Activated CD4-positive, alpha-beta T cell treated with anti-CD3 and anti-CD28 coated beads, Interleukin-2, amount 10 ng/mL, durations not matched to agents 24 days and 14 days (primary cell): ENCODE measurements at regions of chr3 and their contacts with region 1.

Region 1: DNA sequence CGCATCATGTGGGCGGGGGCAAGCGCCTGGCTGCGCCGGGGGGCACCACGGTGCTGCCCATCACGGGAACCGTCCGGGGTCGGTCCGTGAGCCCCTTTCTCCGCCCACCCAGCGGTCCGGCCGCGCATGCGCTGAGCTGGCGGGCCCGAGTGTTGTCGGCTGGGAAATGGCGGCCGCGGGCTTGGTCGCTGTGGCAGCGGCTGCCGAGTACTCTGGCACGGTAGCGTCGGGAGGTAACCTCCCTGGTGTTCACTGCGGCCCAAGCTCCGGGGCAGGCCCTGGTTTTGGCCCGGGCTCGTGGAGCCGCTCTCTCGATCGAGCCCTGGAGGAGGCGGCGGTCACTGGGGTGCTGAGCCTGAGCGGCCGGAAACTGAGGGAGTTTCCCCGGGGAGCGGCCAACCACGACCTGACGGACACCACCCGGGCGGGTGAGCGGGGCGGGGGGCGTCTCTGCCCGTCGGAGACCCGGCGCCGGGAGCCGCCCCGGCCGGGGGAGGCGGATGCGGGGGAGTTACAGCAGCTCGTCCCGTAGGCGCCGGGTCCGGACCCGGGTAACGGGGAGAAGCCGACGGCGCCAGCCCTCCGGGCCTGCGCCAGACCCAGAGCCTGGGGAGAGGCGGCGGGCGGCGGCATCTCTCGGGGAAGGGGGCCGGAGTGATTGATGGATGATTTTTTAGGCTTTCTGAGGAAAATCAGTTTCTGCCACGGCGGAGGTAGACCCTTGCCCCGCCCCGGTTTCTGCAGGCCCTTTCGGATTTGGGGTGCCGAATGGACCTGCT is at the start of gene LRCH3:
- DNase-seq: peak; percentile 96
- H3K4me3 Mint-ChIP-seq: peak within 1 kb of the TSS; percentile 92
- H3K27ac Mint-ChIP-seq: peak within 1 kb of the TSS; percentile 97
- H3K4me1 Mint-ChIP-seq: peaks cover 29% of the 10 kb centered on the region
- H3K27me3 Mint-ChIP-seq: no peaks in the 10 kb centered on the region
- total RNA-seq, gene LRCH3: 54.7 and 56.4 TPM in 2 replicates

Region 2: GRCh38 chr3:197554562-197555280 is 236.6 kb before region 1 on chr3:
- intact Hi-C with region 1: loop called (anchors 5 kb)
- DNase-seq: peak; percentile 98
- H3K4me3 Mint-ChIP-seq: peak overlapping the region; percentile 88
- H3K27ac Mint-ChIP-seq: peak overlapping the region; percentile 98
- H3K4me1 Mint-ChIP-seq: peaks cover 39% of the 10 kb centered on the region
- H3K27me3 Mint-ChIP-seq: peaks cover 9% of the 10 kb centered on the region

Region 3: GRCh38 chr3:197567904-197568681 is 223.2 kb before region 1 on chr3:
- intact Hi-C with region 1: no loop called
- DNase-seq: no peak
- H3K4me3 Mint-ChIP-seq: no peak overlapping the region
- H3K27ac Mint-ChIP-seq: no peak overlapping the region
- H3K4me1 Mint-ChIP-seq: no peaks in the 10 kb centered on the region
- H3K27me3 Mint-ChIP-seq: peaks cover 8% of the 10 kb centered on the region

Region 4: DNA sequence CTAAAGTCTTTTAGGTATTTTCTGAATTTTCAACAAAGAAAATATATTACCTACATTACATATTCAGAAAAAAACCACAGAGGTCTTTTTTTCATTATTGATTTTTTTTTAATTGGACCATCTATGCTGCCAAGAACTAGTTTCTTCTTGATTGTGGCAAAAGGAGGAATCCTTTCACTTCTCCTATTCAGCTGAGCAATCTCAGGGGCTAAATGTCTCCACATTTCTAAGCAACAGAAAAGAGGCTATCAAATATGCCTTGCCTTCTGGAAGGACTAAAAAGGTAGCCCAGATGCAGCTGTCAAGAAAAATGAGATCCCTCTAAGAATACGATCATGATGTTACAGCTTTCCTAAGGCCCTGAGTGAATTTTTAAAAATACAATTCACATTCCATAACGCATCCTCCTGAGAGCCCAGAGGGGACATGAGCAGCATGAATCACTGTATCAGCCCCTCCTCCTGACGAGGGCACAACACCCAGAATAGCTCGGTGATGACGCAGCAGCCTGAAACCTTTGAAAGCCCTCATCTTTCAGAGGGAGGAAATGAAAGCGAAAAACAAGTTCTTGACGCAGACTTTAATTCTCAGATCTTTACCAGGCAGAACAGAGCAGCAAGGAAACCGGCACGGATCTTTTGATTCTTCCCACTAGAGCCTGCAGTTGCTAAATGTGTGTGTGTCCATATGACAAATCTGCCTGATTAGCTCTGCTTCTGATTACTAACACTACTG is 79.2 kb before region 1 on chr3:
- intact Hi-C with region 1: loop called (anchors 2 kb)
- DNase-seq: peak; percentile 95
- H3K4me3 Mint-ChIP-seq: peak overlapping the region; percentile 78
- H3K27ac Mint-ChIP-seq: peak overlapping the region; percentile 93
- H3K4me1 Mint-ChIP-seq: peaks cover 33% of the 10 kb centered on the region
- H3K27me3 Mint-ChIP-seq: no peaks in the 10 kb centered on the region

Region 5: GRCh38 chr3:197749601-197750395 is 41.5 kb before region 1 on chr3 and contains the start of gene FYTTD1:
- intact Hi-C with region 1: loop called (anchors 1 kb)
- DNase-seq: peak; percentile 97
- H3K4me3 Mint-ChIP-seq: peak within 1 kb of the TSS; percentile 92
- H3K27ac Mint-ChIP-seq: peak within 1 kb of the TSS; percentile 96
- H3K4me1 Mint-ChIP-seq: peaks cover 31% of the 10 kb centered on the region
- H3K27me3 Mint-ChIP-seq: peaks cover 4% of the 10 kb centered on the region
- total RNA-seq, gene FYTTD1: 53.2 and 56.8 TPM in 2 replicates

Region 6: DNA sequence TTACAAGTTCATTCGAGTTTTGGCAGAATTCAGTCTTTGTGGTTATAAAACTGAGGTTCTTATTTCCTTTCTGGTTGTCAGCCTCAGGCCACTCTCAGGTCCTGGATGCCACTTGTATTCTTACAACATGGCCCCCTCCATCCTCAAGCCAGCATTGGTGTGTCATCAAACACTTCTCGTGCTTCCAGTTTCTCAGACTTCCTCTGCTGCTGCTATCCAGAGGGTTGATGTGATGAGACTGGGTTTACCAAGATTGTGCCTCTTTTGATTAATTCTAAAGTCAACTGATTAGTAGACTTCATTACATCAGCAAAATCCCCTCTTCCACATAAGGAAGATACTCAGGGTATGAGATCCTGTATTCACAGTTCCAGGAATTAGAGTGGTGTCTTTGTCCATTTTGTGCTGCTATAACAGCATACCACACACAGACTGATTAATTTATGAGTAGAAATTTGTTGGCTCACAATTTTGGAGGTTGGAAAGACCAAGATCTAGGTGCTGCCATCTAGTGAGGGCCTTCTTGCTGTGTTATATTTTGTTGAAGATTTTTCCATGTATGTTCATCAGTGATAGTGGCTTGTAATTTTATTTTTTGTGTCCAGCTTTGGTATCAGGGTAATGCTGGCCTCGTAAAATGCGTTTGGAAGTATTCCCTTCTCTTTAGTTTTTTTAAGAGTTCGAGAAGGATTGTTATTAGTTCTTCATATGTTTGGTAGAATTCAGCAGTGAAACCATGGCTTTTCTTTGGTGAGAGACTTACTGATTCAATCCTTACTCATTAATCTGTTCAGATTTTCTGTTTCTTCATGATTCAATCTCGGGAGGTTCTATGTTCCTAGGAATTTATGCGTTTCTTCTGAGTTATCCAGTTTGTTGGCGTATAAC is 10.8 kb after region 1 on chr3:
- intact Hi-C with region 1: loop called (anchors 1 kb)
- DNase-seq: peak; percentile 74
- H3K4me3 Mint-ChIP-seq: peak overlapping the region; percentile 18
- H3K27ac Mint-ChIP-seq: peak overlapping the region; percentile 34
- H3K4me1 Mint-ChIP-seq: peaks cover 33% of the 10 kb centered on the region
- H3K27me3 Mint-ChIP-seq: no peaks in the 10 kb centered on the region

Region 7: GRCh38 chr3:197847866-197848401 is 56.6 kb after region 1 on chr3:
- intact Hi-C with region 1: loop called (anchors 5 kb)
- DNase-seq: peak; percentile 81
- H3K4me3 Mint-ChIP-seq: peak overlapping the region; percentile 75
- H3K27ac Mint-ChIP-seq: peak overlapping the region; percentile 89
- H3K4me1 Mint-ChIP-seq: peaks cover 15% of the 10 kb centered on the region
- H3K27me3 Mint-ChIP-seq: no peaks in the 10 kb centered on the region

Region 8: GRCh38 chr3:197949754-197950660 is 158.7 kb after region 1 on chr3 and contains the start of gene RPL35A:
- intact Hi-C with region 1: loop called (anchors 5 kb)
- DNase-seq: peak; percentile 95
- H3K4me3 Mint-ChIP-seq: peak within 1 kb of the TSS; percentile 99
- H3K27ac Mint-ChIP-seq: peak within 1 kb of the TSS; percentile 99
- H3K4me1 Mint-ChIP-seq: peaks cover 34% of the 10 kb centered on the region
- H3K27me3 Mint-ChIP-seq: peaks cover 2% of the 10 kb centered on the region
- total RNA-seq, gene RPL35A: 1,350 and 1,372 TPM in 2 replicates